Panc1 (cell line): ENCODE measurements at regions of chr1 and their contacts with region 1.

Region 1: GRCh38 chr1:24635195-24635843 is 7.8 kb upstream of the SRRM1 start:
- DNase-seq: peak; percentile 58
- ATAC-seq: peak; percentile 90
- H3K4me3 ChIP-seq: no peak overlapping the region
- H3K27ac ChIP-seq: no peak overlapping the region
- H3K4me1 ChIP-seq: no peaks in the 10 kb centered on the region
- H3K27me3 ChIP-seq: no peaks in the 10 kb centered on the region
- CTCF ChIP-seq: peak; percentile 73; the same call in 1 of the 2 replicates

Region 2: DNA sequence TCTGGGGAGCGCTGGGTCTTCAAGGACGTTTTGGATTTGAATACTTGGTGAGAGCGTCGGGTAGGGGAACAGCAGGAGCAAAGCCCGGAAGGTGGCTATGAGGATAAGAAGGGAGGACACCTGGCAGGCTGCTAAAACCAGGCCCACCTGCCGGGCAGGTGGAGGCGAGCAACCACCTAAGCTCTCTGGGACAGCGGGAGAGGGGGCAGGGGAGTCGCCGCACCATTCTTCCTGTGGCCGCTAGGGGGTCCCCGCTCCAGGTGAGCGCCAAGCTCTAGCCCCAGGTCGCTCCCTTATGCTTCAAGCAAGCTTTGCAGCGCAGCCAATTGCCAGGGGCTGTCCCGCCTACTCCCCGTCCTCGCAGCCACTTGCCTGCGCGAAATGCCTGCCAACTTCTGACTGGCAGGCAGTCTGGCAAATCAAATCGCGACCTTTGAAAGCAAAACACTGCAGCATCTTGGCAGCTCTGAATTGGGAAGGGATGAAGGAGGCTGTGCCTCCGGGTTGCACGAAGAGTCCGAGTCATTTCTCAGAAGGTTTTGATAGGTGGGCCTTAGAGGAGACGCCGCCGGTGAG is 219.9 kb before region 1 on chr1 and contains the start of gene NIPAL3:
- CTCF ChIA-PET with region 1: no interaction called
- POLR2A ChIA-PET with region 1: no interaction called
- in situ Hi-C with region 1: no loop called
- intact Hi-C with region 1: loop called (anchors 10 kb)
- DNase-seq: peak; percentile 98
- ATAC-seq: peak; percentile 94
- H3K4me3 ChIP-seq: peak within 1 kb of the TSS; percentile 78 to 80
- H3K27ac ChIP-seq: peak within 1 kb of the TSS; percentile 80
- H3K4me1 ChIP-seq: peaks cover 27% of the 10 kb centered on the region; the same call in 1 of the 2 replicates
- H3K27me3 ChIP-seq: no peaks in the 10 kb centered on the region
- CTCF ChIP-seq: peak; percentile 97
- total RNA-seq, gene NIPAL3: 13.6 TPM

Region 3: GRCh38 chr1:24541711-24542346 is 93.5 kb before region 1 on chr1:
- CTCF ChIA-PET with region 1: interaction called, 3 read pairs
- POLR2A ChIA-PET with region 1: interaction called, 4 read pairs
- in situ Hi-C with region 1: no loop called
- intact Hi-C with region 1: loop called (anchors 5 kb)
- DNase-seq: no peak
- ATAC-seq: no peak
- H3K4me3 ChIP-seq: no peak overlapping the region
- H3K27ac ChIP-seq: peak overlapping the region; percentile 72; the same call in 1 of the 2 replicates
- H3K4me1 ChIP-seq: peaks cover 26% of the 10 kb centered on the region
- H3K27me3 ChIP-seq: no peaks in the 10 kb centered on the region
- CTCF ChIP-seq: peak; percentile 88

Region 4: GRCh38 chr1:24594154-24594553 is 41.2 kb before region 1 on chr1:
- CTCF ChIA-PET with region 1: no interaction called
- POLR2A ChIA-PET with region 1: no interaction called
- in situ Hi-C with region 1: no loop called
- intact Hi-C with region 1: loop called (anchors 5 kb)
- DNase-seq: no peak
- ATAC-seq: no peak
- H3K4me3 ChIP-seq: no peak overlapping the region
- H3K27ac ChIP-seq: no peak overlapping the region
- H3K4me1 ChIP-seq: 0 out of 2 replicates have a peak, but pooled peaks cover 5% of the 10 kb centered on the region
- H3K27me3 ChIP-seq: no peaks in the 10 kb centered on the region
- CTCF ChIP-seq: no peak

Region 5: GRCh38 chr1:24692700-24693048 is 57.4 kb after region 1 on chr1:
- CTCF ChIA-PET with region 1: no interaction called
- POLR2A ChIA-PET with region 1: no interaction called
- in situ Hi-C with region 1: no loop called
- intact Hi-C with region 1: no loop called
- DNase-seq: no peak
- ATAC-seq: no peak
- H3K4me3 ChIP-seq: no peak overlapping the region
- H3K27ac ChIP-seq: no peak overlapping the region
- H3K4me1 ChIP-seq: no peaks in the 10 kb centered on the region
- H3K27me3 ChIP-seq: no peaks in the 10 kb centered on the region
- CTCF ChIP-seq: no peak

Region 6: DNA sequence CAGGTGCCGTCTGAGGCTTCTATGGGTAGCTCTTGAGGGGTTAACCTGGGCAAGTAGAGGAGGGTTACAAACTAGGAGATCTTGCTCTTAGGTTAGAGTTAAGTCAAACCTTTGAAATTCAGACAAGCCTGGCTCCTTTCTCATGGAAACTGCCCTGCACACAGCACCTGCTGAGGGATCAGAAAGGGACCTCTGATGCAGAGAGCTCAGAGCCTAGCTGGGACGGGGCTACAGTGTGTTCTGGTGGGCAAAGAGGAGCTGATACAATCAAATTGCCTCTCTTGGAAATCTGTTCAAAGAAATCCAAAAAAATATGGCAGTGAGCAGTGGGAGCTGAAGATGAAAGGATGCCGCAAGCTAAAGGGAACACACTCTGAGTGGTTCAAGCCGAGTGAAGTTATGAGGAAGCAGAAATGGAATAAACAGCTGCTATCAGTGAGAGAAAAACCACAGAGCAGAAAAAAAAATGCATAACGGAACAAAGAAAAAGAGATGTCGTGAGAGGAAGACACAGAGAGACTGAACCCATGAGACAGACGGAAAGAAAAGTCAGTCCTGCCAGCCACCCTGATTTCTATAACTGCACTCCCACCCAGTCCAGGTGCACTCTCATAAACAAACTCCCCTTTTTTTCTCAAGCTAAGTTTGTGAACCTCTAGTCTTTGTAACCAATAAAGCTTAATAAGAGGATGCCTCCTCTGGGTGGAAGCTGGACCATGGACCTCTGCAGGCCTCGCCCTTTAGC is 1335.9 kb after region 1 on chr1:
- CTCF ChIA-PET with region 1: no interaction called
- POLR2A ChIA-PET with region 1: interaction called, 10 read pairs
- in situ Hi-C with region 1: no loop called
- intact Hi-C with region 1: no loop called
- DNase-seq: no peak
- ATAC-seq: no peak
- H3K4me3 ChIP-seq: no peak overlapping the region
- H3K27ac ChIP-seq: no peak overlapping the region
- H3K4me1 ChIP-seq: no peaks in the 10 kb centered on the region
- H3K27me3 ChIP-seq: no peaks in the 10 kb centered on the region
- CTCF ChIP-seq: no peak